B cell (primary cell): ENCODE measurements at regions of chr13 and their contacts with region 1.

Region 1: GRCh38 chr13:39616087-39616694 is 13.2 kb upstream of the LHFPL6 start:
- DNase-seq: peak; percentile 63
- ATAC-seq: peak; percentile 57
- H3K4me3 ChIP-seq: no peak overlapping the region
- H3K4me3 Mint-ChIP-seq: no peak overlapping the region
- H3K27ac ChIP-seq: no peak overlapping the region
- H3K27ac Mint-ChIP-seq: no peak overlapping the region
- H3K4me1 ChIP-seq: no peaks in the 10 kb centered on the region
- H3K4me1 Mint-ChIP-seq: no peaks in the 10 kb centered on the region
- H3K27me3 ChIP-seq: peaks cover 0 to 13% (median 0%) of the 10 kb centered on the region in 4 experiments
- H3K27me3 Mint-ChIP-seq: peaks cover 26% of the 10 kb centered on the region
- CTCF ChIP-seq: peak; percentile 90

Region 2: GRCh38 chr13:38970380-38971051 is 645.7 kb before region 1 on chr13:
- CTCF ChIA-PET with region 1: interaction called, 13 read pairs
- POLR2A ChIA-PET with region 1: no interaction called
- intact Hi-C with region 1: loop called (anchors 2 kb)
- DNase-seq: no peak
- ATAC-seq: no peak
- H3K4me3 ChIP-seq: no peak overlapping the region
- H3K4me3 Mint-ChIP-seq: no peak overlapping the region
- H3K27ac ChIP-seq: no peak overlapping the region
- H3K27ac Mint-ChIP-seq: no peak overlapping the region
- H3K4me1 ChIP-seq: no peaks in the 10 kb centered on the region
- H3K4me1 Mint-ChIP-seq: no peaks in the 10 kb centered on the region
- H3K27me3 ChIP-seq: no peaks in the 10 kb centered on the region
- H3K27me3 Mint-ChIP-seq: peaks cover 14% of the 10 kb centered on the region
- CTCF ChIP-seq: no peak

Region 3: DNA sequence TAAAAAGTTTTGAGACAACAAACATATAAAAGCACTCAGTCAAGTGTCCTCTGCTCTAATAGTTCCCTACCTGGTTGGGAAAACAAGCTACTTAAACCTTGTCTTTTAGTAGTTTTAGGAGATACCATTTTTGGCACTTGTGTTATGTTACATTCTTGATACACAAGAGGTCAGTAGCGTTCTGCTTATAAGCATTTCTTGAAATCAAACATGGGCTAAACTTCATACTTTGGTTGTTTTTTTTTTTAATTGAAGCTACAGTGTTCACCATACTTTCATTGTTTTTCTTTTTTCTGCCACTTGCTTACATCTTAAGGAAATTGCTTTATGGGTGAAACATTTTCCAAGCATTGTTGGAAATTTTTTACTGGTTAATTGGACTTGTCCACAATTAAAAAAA is 565.0 kb before region 1 on chr13:
- CTCF ChIA-PET with region 1: interaction called, 14 read pairs
- POLR2A ChIA-PET with region 1: no interaction called
- intact Hi-C with region 1: loop called (anchors 1 kb)
- DNase-seq: peak; percentile 29
- ATAC-seq: no peak
- H3K4me3 ChIP-seq: no peak overlapping the region
- H3K4me3 Mint-ChIP-seq: no peak overlapping the region
- H3K27ac ChIP-seq: no peak overlapping the region
- H3K27ac Mint-ChIP-seq: no peak overlapping the region
- H3K4me1 ChIP-seq: no peaks in the 10 kb centered on the region
- H3K4me1 Mint-ChIP-seq: peaks cover 5% of the 10 kb centered on the region
- H3K27me3 ChIP-seq: no peaks in the 10 kb centered on the region
- H3K27me3 Mint-ChIP-seq: no peaks in the 10 kb centered on the region
- CTCF ChIP-seq: peak; percentile 60

Region 4: GRCh38 chr13:39144941-39145533 is 471.2 kb before region 1 on chr13:
- CTCF ChIA-PET with region 1: no interaction called
- POLR2A ChIA-PET with region 1: no interaction called
- intact Hi-C with region 1: loop called (anchors 10 kb)
- DNase-seq: no peak
- ATAC-seq: no peak
- H3K4me3 ChIP-seq: no peak overlapping the region
- H3K4me3 Mint-ChIP-seq: no peak overlapping the region
- H3K27ac ChIP-seq: no peak overlapping the region
- H3K27ac Mint-ChIP-seq: no peak overlapping the region
- H3K4me1 ChIP-seq: no peaks in the 10 kb centered on the region
- H3K4me1 Mint-ChIP-seq: no peaks in the 10 kb centered on the region
- H3K27me3 ChIP-seq: peaks cover 0 to 2% (median 0%) of the 10 kb centered on the region in 4 experiments
- H3K27me3 Mint-ChIP-seq: peaks cover 22% of the 10 kb centered on the region
- CTCF ChIP-seq: no peak

Region 5: DNA sequence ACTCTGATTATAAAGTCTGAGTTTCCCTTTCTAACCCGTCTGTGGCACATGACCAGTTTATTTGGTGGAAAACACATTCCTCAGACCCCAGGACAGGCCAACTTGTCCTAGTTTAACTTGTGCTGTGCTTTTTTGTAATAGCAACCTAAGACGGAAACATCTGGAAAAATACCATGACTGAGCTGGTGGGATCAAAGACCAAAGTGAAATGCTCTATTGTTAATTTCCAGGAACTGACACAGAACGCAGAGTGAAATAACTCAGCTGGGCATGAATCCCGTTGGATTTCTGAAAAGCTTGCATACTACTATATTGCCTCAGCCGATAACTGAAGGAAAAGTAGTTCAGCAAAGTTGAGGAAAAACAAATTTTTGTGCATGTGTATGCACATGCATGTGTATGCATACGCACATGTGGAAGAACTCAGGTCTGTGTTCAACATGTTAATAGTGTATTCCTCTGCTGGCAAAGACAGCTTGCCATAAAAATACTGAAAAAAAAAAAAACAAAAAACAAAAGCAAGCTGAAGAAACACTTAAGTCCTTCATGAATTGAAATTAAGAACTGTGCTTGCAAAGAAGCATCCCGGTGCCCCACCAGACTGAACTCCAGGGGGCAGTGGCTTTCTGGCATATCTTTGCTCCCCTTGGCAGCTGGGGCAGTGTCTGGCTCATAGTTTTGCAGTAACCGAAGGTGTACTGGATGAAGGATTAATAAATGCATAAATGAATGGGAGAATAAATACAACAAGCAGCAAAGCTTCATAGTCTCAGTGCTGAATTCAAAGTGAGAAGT is 201.0 kb before region 1 on chr13:
- CTCF ChIA-PET with region 1: interaction called, 6 read pairs
- POLR2A ChIA-PET with region 1: no interaction called
- intact Hi-C with region 1: loop called (anchors 5 kb)
- DNase-seq: peak; percentile 13
- ATAC-seq: no peak
- H3K4me3 ChIP-seq: no peak overlapping the region
- H3K4me3 Mint-ChIP-seq: no peak overlapping the region
- H3K27ac ChIP-seq: no peak overlapping the region
- H3K27ac Mint-ChIP-seq: no peak overlapping the region
- H3K4me1 ChIP-seq: peaks cover 0 to 11% of the 10 kb centered on the region in 2 donors
- H3K4me1 Mint-ChIP-seq: no peaks in the 10 kb centered on the region
- H3K27me3 ChIP-seq: no peaks in the 10 kb centered on the region
- H3K27me3 Mint-ChIP-seq: no peaks in the 10 kb centered on the region
- CTCF ChIP-seq: no peak

Region 6: DNA sequence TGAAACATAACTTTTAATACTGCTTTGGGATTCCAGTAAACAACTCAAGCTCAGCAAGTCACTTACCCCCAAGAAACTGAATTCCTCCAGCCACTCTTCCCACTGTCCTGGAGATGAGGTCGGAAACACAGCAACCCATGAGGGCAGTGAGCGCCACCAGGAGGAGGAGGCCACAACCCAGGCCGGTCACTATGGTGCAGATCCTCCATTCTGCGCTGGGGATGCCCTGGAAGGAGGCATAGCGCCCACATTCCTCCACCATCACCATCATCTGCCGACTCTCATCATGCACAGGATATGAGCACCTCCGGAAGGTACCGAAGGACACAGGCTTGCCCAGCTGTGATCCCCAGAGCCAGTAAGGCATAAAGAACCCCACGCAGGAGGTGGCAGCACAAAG is 15.4 kb before region 1 on chr13:
- CTCF ChIA-PET with region 1: interaction called, 17 read pairs
- POLR2A ChIA-PET with region 1: no interaction called
- intact Hi-C with region 1: no loop called
- DNase-seq: no peak
- ATAC-seq: no peak
- H3K4me3 ChIP-seq: no peak overlapping the region
- H3K4me3 Mint-ChIP-seq: no peak overlapping the region
- H3K27ac ChIP-seq: no peak overlapping the region
- H3K27ac Mint-ChIP-seq: no peak overlapping the region
- H3K4me1 ChIP-seq: peaks cover 12 to 15% of the 10 kb centered on the region in 2 donors
- H3K4me1 Mint-ChIP-seq: peaks cover 15% of the 10 kb centered on the region
- H3K27me3 ChIP-seq: peaks cover 0 to 26% (median 15%) of the 10 kb centered on the region in 4 experiments
- H3K27me3 Mint-ChIP-seq: peaks cover 35% of the 10 kb centered on the region
- CTCF ChIP-seq: no peak

Region 7: DNA sequence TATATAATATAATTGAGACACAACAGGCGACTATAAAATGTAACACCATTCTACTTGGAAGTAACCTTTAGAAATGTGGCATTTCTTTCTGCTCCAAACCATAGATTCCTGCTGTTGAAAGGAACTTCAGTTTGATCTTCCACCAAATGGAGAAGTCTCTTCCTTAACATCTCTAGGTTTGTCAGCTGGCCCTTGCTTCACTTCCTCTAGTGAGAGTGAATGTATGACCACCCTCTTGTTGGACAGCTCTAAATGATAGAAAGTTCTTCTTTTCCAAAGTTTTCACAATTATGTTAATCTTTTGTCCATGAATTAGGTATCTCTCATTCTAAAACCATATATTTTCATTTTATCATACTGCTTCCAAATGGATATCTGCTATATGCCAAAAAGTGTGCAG is 25.5 kb after region 1 on chr13:
- CTCF ChIA-PET with region 1: no interaction called
- POLR2A ChIA-PET with region 1: no interaction called
- intact Hi-C with region 1: no loop called
- DNase-seq: no peak
- ATAC-seq: no peak
- H3K4me3 ChIP-seq: no peak overlapping the region
- H3K4me3 Mint-ChIP-seq: no peak overlapping the region
- H3K27ac ChIP-seq: no peak overlapping the region
- H3K27ac Mint-ChIP-seq: no peak overlapping the region
- H3K4me1 ChIP-seq: no peaks in the 10 kb centered on the region
- H3K4me1 Mint-ChIP-seq: no peaks in the 10 kb centered on the region
- H3K27me3 ChIP-seq: peaks cover 0 to 14% (median 2%) of the 10 kb centered on the region in 4 experiments
- H3K27me3 Mint-ChIP-seq: peaks cover 38% of the 10 kb centered on the region
- CTCF ChIP-seq: no peak

Region 8: DNA sequence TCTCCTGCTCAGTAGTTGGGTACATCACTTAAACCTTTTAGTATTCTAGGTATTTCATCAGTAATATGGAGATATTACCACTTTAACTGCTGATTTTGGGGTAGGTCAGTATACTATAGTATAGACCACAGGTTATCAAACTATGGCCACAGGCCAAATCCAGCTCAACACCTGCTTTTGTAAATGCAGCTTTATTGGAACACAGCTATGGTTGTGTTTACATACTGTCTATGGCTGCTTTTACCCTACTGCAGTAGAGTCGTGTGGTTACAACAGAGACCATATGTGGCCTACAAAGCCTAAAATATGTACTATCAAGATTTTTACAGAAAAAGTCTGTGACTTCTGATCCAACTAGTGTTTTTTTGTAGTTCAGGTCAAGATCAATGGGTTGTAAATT is 49.6 kb after region 1 on chr13:
- CTCF ChIA-PET with region 1: no interaction called
- POLR2A ChIA-PET with region 1: no interaction called
- intact Hi-C with region 1: no loop called
- DNase-seq: no peak
- ATAC-seq: no peak
- H3K4me3 ChIP-seq: no peak overlapping the region
- H3K4me3 Mint-ChIP-seq: no peak overlapping the region
- H3K27ac ChIP-seq: no peak overlapping the region
- H3K27ac Mint-ChIP-seq: no peak overlapping the region
- H3K4me1 ChIP-seq: no peaks in the 10 kb centered on the region
- H3K4me1 Mint-ChIP-seq: no peaks in the 10 kb centered on the region
- H3K27me3 ChIP-seq: no peaks in the 10 kb centered on the region
- H3K27me3 Mint-ChIP-seq: no peaks in the 10 kb centered on the region
- CTCF ChIP-seq: no peak